Head of caudate nucleus (tissue), 42 donors: ENCODE measurements at regions of chr7 and their contacts with region 1.

Region 1: GRCh38 chr7:18345641-18346234 is 149.8 kb upstream of the HDAC9 start:
- DNase-seq: peak in 33 of 42 donors; percentile 5 to 72 (median 46)

Region 2: DNA sequence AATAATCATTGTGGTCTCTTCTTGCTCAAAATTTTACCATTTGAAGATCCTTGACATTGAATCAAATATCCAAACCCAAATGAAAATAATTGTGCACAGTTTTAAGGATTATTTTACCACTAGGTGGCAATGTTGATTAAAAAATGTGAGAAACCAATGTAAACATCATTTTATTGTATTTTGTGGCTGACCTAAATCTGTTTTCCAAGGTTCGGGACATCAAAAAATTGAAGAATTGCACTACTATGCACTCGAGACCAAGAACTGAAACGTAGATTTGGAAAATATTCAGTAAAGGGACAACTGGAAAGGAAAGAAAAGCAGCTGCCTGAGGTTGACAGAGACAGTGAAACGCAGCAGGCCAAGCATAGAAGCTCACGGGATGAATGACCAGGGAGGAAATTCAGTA is 664.8 kb before region 1 on chr7:
- intact Hi-C with region 1: loop called (anchors 10 kb)
- DNase-seq: peak in 2 of 42 donors; percentile 21 to 23

Region 3: DNA sequence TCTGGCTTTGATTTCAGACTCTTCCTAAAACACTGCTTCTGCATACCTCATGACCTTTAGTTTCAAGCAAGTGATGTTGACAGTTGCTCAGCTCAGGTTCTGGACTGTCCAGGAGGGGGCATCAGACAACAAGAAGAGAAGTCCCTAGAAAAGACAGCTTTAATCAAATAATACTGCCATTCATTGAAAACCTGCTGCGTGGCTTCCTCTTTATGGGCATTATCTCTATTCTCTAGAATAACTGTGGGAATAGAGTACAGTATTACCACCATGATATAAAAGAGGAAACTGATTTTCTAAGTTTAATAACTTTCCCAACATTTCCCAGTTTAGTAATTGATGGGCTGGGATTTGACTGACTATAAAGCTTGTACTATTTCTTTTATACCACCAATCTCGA is 575.8 kb before region 1 on chr7:
- intact Hi-C with region 1: loop called (anchors 10 kb)
- DNase-seq: peak; percentile 10 to 87 (median 64)